Heart left ventricle (tissue), 16 donors: ENCODE measurements at regions of chr4 and their contacts with region 1.

Region 1: DNA sequence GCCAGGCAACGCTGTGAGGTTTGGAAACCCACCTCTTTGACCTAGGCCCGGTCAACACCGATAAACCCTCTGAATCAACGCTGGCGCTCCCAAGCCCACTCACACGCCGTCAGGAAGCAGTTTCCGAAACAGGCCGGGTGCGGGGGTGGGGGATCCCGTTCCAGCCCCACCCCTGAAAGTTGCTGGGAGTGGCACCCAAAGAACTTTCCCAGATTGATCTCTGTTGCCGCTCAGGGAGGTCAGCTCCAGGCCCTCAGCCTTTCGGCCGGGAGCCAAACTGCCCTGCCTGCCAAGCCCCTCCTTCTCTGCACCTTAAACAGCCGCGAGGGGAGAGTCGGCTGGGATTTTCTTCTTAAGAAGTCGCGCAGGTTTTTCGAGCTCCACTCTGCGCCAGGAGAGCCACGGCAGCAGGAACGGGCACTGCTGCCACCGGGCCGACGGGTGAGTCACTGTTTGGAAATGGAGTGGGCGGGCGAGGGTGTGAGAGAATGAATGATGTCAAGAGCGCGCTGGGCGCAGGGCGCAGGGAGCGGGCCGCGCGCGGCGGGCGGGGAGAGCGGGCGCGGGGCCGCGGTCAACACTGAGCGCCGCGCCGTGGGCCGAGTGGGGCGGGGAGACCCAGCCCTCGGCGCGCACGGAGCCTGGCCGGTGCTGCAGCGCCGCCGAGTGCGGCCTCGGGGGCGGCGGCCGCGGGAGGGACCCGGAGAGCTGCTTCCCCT is at the start of gene SGMS2:
- DNase-seq: peak; percentile 84 to 93 (median 89)
- ATAC-seq: peak; percentile 82 to 98 (median 92)
- H3K4me3 ChIP-seq: peak within 1 kb of the TSS; percentile 64 to 93 (median 85)
- H3K27ac ChIP-seq: peak within 1 kb of the TSS; percentile 71 to 96 (median 93)
- H3K4me1 ChIP-seq: peaks cover 0 to 38% (median 13%) of the 10 kb centered on the region in 12 donors
- H3K27me3 ChIP-seq: no peaks in the 10 kb centered on the region
- CTCF ChIP-seq: peak in 1 of 12 donors; percentile 36
- POLR2A ChIP-seq: peak; percentile 3 to 56
- total RNA-seq, gene SGMS2: 19.2 to 117 (median 29.8) TPM

Region 2: GRCh38 chr4:107757864-107758476 is 66.5 kb before region 1 on chr4:
- intact Hi-C with region 1: loop called in 3 of 10 experiments (anchors 5 kb)
- DNase-seq: no peak
- ATAC-seq: no peak
- H3K4me3 ChIP-seq: no peak overlapping the region
- H3K27ac ChIP-seq: no peak overlapping the region
- H3K4me1 ChIP-seq: peaks cover 0 to 24% (median 0%) of the 10 kb centered on the region in 12 donors
- H3K27me3 ChIP-seq: no peaks in the 10 kb centered on the region
- CTCF ChIP-seq: peak; percentile 34 to 74 (median 59)
- POLR2A ChIP-seq: no peak

Region 3: DNA sequence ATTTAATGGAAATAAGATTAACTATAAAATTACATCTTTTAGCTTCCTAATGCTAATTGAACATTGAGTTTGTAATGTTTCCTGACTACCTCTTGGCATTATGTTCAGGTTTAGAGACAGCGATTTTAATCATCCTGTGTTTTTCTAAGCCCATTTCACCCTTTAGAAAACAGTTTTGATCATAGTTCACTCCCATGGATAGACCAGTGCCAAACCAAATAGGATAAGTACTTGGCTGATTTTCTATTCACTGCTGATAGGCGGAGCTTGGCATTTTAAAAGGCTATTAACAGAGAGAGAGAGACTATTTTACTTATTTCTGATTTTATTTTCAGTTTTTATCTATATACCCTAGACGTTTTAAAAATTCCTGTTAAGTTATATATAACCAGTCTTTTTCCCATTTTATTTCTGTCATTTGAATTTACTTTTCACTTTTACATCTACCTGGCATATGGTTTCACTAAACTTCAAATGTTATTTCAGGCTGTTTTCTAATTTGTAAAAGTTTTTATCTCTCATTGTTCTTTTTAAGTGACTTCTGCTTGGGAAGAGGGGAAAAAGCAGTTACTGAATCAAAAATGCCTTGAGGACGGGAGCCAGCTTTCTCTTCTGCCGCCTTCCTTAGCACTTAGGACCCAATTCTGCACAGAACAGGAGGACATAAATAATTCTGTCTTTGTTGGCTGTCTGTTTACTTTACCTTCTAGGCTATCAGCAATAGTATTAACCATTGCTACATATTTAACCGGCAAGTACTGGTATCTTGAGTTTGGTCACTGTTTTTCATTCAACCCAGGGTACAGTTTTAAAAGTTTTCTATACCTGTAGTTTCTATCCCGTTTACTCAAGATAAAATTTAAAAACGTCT is 46.6 kb after region 1 on chr4:
- intact Hi-C with region 1: loop called in 1 of 10 experiments (anchors 2 kb)
- DNase-seq: no peak
- ATAC-seq: peak in 3 of 4 donors; percentile 45 to 74 (median 59)
- H3K4me3 ChIP-seq: peak overlapping the region in 9 of 12 donors; percentile 4 to 50 (median 26)
- H3K27ac ChIP-seq: peak overlapping the region in 4 of 12 donors; percentile 2 to 18 (median 6)
- H3K4me1 ChIP-seq: peaks cover 0 to 29% (median 12%) of the 10 kb centered on the region in 12 donors
- H3K27me3 ChIP-seq: no peaks in the 10 kb centered on the region
- CTCF ChIP-seq: no peak
- POLR2A ChIP-seq: no peak

Region 4: DNA sequence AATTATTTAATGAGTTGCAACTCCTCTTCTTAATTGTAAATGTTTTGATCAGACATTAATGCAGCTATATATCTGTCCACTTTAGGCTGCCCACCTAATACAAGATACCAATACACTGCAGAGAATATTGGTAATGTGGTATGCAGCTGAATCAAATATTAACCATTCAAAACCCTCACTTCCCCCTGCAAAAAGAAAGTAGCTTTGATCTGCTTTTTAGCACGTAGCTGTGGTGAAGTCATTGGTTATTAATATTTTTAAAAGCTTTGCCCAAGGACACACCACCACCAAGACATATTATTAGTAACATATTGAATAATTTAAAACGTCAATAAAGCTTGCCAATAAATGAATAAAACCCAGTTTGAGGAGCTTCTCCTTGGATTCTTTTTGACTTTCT is 78.2 kb after region 1 on chr4:
- intact Hi-C with region 1: loop called in 5 of 10 experiments (anchors 5 to 10 kb)
- DNase-seq: no peak
- ATAC-seq: no peak
- H3K4me3 ChIP-seq: no peak overlapping the region
- H3K27ac ChIP-seq: peak overlapping the region in 2 of 12 donors; percentile 2 to 66
- H3K4me1 ChIP-seq: peaks cover 0 to 7% (median 0%) of the 10 kb centered on the region in 12 donors
- H3K27me3 ChIP-seq: no peaks in the 10 kb centered on the region
- CTCF ChIP-seq: no peak
- POLR2A ChIP-seq: no peak

Region 5: GRCh38 chr4:107989537-107990386 is 165.2 kb after region 1 on chr4 and contains the start of gene HADH:
- intact Hi-C with region 1: loop called in 2 of 10 experiments (anchors 5 to 10 kb)
- DNase-seq: peak; percentile 94 to 97 (median 95)
- ATAC-seq: peak; percentile 98 to 99 (median 98)
- H3K4me3 ChIP-seq: peak within 1 kb of the TSS; percentile 62 to 92 (median 84)
- H3K27ac ChIP-seq: peak within 1 kb of the TSS; percentile 77 to 97 (median 94)
- H3K4me1 ChIP-seq: peaks cover 0 to 57% (median 33%) of the 10 kb centered on the region in 12 donors
- H3K27me3 ChIP-seq: no peaks in the 10 kb centered on the region
- CTCF ChIP-seq: no peak
- POLR2A ChIP-seq: peak; percentile 95 to 98
- total RNA-seq, gene HADH: 138 to 382 (median 217) TPM